ENCODE measurements at regions of chr17 and their contacts with region 1.

Region 1: GRCh38 chr17:28842282-28843012 is at the start of gene FAM222B:
- DNase-seq: peak; percentile 95

Region 2: GRCh38 chr17:28792877-28793661 is 49.4 kb before region 1 on chr17:
- CTCF ChIA-PET with region 1: no interaction called
- POLR2A ChIA-PET with region 1: interaction called, 16 read pairs
- DNase-seq: peak; percentile 16

Region 3: DNA sequence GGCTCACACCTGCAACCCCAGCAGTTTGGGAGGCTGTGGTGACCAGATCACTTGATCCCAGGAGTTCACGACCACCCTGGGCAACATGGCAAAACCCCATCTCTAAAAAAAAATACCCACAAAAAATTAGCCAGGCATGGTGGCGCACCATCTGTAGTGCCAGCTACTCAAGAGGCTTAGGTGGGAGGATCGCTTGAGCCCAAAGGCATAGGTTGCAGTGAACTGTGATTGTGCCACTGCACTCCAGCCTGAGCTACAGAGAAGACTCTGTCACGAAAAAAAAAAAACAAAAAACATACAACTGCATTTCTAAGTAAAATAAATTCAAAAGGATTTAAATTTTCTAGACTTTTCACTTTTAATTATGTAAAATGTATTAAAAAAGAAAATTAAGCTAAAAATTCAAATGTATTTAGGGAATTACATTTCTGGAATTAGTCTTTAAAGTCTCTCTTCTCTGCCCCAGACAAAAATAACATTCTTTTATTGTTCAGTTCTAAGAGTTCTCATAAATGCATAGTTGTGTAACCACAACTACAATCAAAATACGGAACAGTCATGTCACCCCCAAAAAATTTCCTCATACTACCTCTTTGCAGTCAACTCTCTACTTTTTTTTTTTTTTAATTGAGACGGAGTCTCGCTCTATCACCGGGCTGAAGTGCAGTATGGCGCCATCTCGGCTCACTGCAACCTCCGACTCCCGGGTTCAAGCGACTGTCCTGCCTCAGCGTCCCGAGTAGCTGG is 14.0 kb before region 1 on chr17:
- CTCF ChIA-PET with region 1: interaction called, 5 read pairs
- POLR2A ChIA-PET with region 1: interaction called, 12 read pairs
- DNase-seq: no peak

Region 4: GRCh38 chr17:28896884-28897768 is 54.7 kb after region 1 on chr17 and contains the start of gene FLOT2:
- CTCF ChIA-PET with region 1: no interaction called
- POLR2A ChIA-PET with region 1: interaction called, 17 read pairs
- DNase-seq: peak; percentile 55